CD8-positive, alpha-beta T cell (primary cell): ENCODE measurements at regions of chr2 and their contacts with region 1.

Region 1: DNA sequence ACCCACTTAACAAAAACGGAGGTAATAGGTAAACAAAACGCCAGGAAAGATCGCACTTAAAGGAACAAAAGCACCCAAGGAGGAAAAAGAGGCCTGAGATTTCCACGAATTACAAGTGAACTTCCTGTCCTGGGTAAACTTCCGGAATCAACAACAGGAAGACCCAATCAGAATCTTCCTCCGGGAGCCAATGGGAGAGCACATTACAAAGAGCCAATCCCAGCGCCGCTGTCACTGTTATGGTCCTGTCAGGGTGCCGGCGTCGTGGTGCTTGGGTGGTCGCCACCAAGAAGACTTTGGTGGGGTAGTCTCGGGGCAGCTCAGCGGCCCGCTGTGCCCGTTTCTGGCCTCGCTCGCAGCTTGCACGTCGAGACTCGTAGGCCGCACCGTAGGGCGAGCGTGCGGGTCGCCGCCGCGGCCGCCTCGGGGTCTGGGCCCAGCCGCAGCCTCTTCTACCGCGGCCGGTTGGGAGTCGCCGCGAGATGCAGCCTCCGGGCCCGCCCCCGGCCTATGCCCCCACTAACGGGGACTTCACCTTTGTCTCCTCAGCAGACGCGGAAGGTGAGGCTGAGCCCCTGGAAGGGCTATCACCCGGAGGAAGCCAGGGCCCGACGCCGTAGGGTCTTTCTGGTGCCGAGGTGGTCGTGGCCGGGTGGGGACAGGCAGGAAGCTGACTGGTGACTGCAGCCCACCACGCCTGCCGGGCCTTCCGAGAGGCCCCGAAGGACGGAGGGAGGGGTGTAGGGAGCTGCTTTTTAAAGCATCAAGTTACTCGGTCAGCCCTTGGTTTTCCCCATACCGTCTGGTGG is at the start of gene YIPF4:
- DNase-seq: peak; percentile 83 to 95 (median 90)
- ATAC-seq: peak; percentile 97
- H3K4me3 ChIP-seq: peak within 1 kb of the TSS; percentile 96 to 97
- H3K4me3 Mint-ChIP-seq: peak within 1 kb of the TSS; percentile 85
- H3K27ac ChIP-seq: peak within 1 kb of the TSS; percentile 58 to 93
- H3K27ac Mint-ChIP-seq: peak within 1 kb of the TSS; percentile 95
- H3K4me1 ChIP-seq: peaks cover 34% of the 10 kb centered on the region
- H3K4me1 Mint-ChIP-seq: peaks cover 36% of the 10 kb centered on the region
- H3K27me3 ChIP-seq: no peaks in the 10 kb centered on the region
- H3K27me3 Mint-ChIP-seq: no peaks in the 10 kb centered on the region
- CTCF ChIP-seq: no peak
- total RNA-seq, gene YIPF4: 10.4 to 10.9 TPM

Region 2: GRCh38 chr2:32010670-32011484 is 267.0 kb before region 1 on chr2 and contains the start of gene MEMO1:
- CTCF ChIA-PET with region 1: no interaction called
- POLR2A ChIA-PET with region 1: no interaction called
- intact Hi-C with region 1: loop called (anchors 1 to 10 kb)
- DNase-seq: peak; percentile 76 to 95 (median 92)
- ATAC-seq: peak; percentile 76
- H3K4me3 ChIP-seq: peak within 1 kb of the TSS; percentile 66 to 74
- H3K4me3 Mint-ChIP-seq: peak within 1 kb of the TSS; percentile 85
- H3K27ac ChIP-seq: peak within 1 kb of the TSS; percentile 44 to 79
- H3K27ac Mint-ChIP-seq: peak within 1 kb of the TSS; percentile 91
- H3K4me1 ChIP-seq: peaks cover 17% of the 10 kb centered on the region
- H3K4me1 Mint-ChIP-seq: peaks cover 38% of the 10 kb centered on the region
- H3K27me3 ChIP-seq: no peaks in the 10 kb centered on the region
- H3K27me3 Mint-ChIP-seq: no peaks in the 10 kb centered on the region
- CTCF ChIP-seq: no peak
- total RNA-seq, gene MEMO1: 32.7 to 34.5 TPM

Region 3: DNA sequence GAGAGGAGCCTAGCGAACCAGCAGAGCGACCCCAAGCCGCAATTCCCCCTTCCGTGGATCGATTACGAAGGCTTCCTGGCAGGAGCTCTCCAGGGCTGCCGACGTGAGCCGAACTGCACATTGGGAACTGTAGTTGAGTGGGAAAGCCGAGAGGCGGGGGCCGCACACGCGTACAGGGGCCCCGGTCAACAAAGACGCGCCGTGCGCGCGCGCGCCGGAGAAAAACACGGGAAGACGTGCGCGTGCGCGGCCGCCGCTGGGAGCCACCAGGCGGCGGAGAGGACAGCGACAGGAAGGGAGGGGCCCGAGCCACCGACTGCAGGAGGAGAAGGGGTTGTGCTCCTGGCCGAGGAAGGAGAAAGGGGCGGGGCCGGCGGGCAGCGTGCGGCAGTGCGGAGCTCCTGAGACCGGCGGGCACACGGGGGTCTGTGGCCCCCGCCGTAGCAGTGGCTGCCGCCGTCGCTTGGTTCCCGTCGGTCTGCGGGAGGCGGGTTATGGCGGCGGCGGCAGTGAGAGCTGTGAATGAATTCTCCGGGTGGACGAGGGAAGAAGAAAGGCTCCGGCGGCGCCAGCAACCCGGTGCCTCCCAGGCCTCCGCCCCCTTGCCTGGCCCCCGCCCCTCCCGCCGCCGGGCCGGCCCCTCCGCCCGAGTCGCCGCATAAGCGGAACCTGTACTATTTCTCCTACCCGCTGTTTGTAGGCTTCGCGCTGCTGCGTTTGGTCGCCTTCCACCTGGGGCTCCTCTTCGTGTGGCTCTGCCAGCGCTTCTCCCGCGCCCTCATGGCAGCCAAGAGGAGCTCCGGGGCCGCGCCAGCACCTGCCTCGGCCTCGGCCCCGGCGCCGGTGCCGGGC is 214.3 kb before region 1 on chr2 and contains the start of gene SPAST:
- CTCF ChIA-PET with region 1: no interaction called
- POLR2A ChIA-PET with region 1: no interaction called
- intact Hi-C with region 1: loop called (anchors 1 to 5 kb)
- DNase-seq: peak; percentile 91 to 99 (median 96)
- ATAC-seq: peak; percentile 88
- H3K4me3 ChIP-seq: peak within 1 kb of the TSS; percentile 72 to 98
- H3K4me3 Mint-ChIP-seq: peak within 1 kb of the TSS; percentile 99
- H3K27ac ChIP-seq: peak within 1 kb of the TSS; percentile 76 to 81
- H3K27ac Mint-ChIP-seq: peak within 1 kb of the TSS; percentile 96
- H3K4me1 ChIP-seq: peaks cover 20% of the 10 kb centered on the region
- H3K4me1 Mint-ChIP-seq: peaks cover 36% of the 10 kb centered on the region
- H3K27me3 ChIP-seq: no peaks in the 10 kb centered on the region
- H3K27me3 Mint-ChIP-seq: no peaks in the 10 kb centered on the region
- CTCF ChIP-seq: peak; percentile 49
- total RNA-seq, gene SPAST: 7.4 to 9.4 TPM

Region 4: DNA sequence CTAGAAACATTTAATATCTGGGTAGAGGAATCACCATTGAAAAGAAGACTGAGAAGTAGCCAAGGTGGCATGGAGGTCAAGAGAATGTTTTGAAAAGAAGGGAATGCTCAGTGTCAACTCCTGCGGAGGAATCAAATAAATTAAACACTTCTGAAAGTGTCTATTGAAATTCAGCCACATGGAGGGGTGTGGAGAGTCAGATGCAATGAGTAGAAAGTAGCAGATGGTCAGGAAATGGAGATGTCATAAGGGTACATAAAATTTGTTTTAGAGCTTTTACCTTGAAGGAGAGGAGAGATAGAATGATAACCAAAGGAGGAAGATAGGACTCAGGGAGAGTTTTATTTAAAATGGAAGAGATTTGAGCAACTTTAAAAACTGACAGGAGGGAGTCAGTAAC is 48.2 kb before region 1 on chr2:
- CTCF ChIA-PET with region 1: no interaction called
- POLR2A ChIA-PET with region 1: no interaction called
- intact Hi-C with region 1: no loop called
- DNase-seq: no peak
- ATAC-seq: no peak
- H3K4me3 ChIP-seq: no peak overlapping the region
- H3K4me3 Mint-ChIP-seq: no peak overlapping the region
- H3K27ac ChIP-seq: no peak overlapping the region
- H3K27ac Mint-ChIP-seq: no peak overlapping the region
- H3K4me1 ChIP-seq: no peaks in the 10 kb centered on the region
- H3K4me1 Mint-ChIP-seq: no peaks in the 10 kb centered on the region
- H3K27me3 ChIP-seq: no peaks in the 10 kb centered on the region
- H3K27me3 Mint-ChIP-seq: no peaks in the 10 kb centered on the region
- CTCF ChIP-seq: no peak

Region 5: GRCh38 chr2:32627814-32628579 is 350.1 kb after region 1 on chr2 and contains the start of gene TTC27:
- CTCF ChIA-PET with region 1: no interaction called
- POLR2A ChIA-PET with region 1: no interaction called
- intact Hi-C with region 1: loop called (anchors 1 to 5 kb)
- DNase-seq: peak; percentile 87 to 96 (median 95)
- ATAC-seq: peak; percentile 99
- H3K4me3 ChIP-seq: peak within 1 kb of the TSS; percentile 82 to 89
- H3K4me3 Mint-ChIP-seq: peak within 1 kb of the TSS; percentile 93
- H3K27ac ChIP-seq: peak within 1 kb of the TSS; percentile 73
- H3K27ac Mint-ChIP-seq: peak within 1 kb of the TSS; percentile 90
- H3K4me1 ChIP-seq: no peaks in the 10 kb centered on the region
- H3K4me1 Mint-ChIP-seq: peaks cover 35% of the 10 kb centered on the region
- H3K27me3 ChIP-seq: no peaks in the 10 kb centered on the region
- H3K27me3 Mint-ChIP-seq: no peaks in the 10 kb centered on the region
- CTCF ChIP-seq: no peak
- total RNA-seq, gene TTC27: 9.6 to 12.1 TPM

Region 6: DNA sequence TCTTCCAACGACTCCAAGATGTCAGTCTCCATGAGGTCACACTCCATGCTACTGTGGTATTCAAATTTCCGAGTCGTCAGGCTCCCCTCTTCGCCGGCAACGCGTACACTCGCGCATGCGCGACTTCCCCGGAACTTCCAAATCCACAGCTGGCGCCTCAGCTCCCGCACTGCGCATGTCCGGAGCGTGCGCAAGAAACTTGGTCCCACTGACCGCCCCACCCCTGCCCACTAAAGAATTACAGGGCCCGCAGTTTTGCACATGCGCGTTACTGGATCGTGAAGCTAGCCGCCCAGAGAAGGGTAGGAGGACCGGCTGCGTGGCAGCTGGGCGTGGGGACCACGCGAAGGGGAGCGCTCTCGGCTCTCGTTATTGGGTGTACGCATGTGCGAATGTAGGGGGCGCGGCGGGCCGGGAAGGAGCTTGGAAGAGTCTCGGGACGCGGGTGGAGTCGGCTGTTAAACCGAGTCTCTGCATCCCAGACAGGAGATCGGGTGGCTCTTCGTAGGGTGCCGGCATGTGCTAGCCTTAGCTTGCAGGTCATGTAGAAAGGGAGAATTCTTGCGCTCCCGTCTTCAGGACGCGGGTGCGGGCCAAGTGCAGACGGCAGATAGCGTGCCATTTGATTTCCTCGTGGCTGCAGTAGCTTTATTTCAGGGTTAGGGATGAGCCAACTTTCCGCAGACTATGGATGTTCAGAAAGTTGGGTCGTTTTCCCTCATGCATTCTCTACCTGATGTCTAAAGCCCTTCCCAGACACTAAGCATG is 1321.5 kb after region 1 on chr2 and contains the start of gene FAM98A:
- CTCF ChIA-PET with region 1: no interaction called
- POLR2A ChIA-PET with region 1: no interaction called
- intact Hi-C with region 1: loop called in 1 of 2 experiments (anchors 5 kb)
- DNase-seq: peak; percentile 96 to 100 (median 99)
- ATAC-seq: peak; percentile 91
- H3K4me3 ChIP-seq: peak within 1 kb of the TSS; percentile 92 to 94
- H3K4me3 Mint-ChIP-seq: peak within 1 kb of the TSS; percentile 99
- H3K27ac ChIP-seq: peak within 1 kb of the TSS; percentile 83 to 85
- H3K27ac Mint-ChIP-seq: peak within 1 kb of the TSS; percentile 96
- H3K4me1 ChIP-seq: peaks cover 22% of the 10 kb centered on the region
- H3K4me1 Mint-ChIP-seq: peaks cover 34% of the 10 kb centered on the region
- H3K27me3 ChIP-seq: no peaks in the 10 kb centered on the region
- H3K27me3 Mint-ChIP-seq: no peaks in the 10 kb centered on the region
- CTCF ChIP-seq: no peak
- total RNA-seq, gene FAM98A: 15.9 to 21.0 TPM